ENCODE measurements at regions of chr4 and their contacts with region 1.

Region 1: DNA sequence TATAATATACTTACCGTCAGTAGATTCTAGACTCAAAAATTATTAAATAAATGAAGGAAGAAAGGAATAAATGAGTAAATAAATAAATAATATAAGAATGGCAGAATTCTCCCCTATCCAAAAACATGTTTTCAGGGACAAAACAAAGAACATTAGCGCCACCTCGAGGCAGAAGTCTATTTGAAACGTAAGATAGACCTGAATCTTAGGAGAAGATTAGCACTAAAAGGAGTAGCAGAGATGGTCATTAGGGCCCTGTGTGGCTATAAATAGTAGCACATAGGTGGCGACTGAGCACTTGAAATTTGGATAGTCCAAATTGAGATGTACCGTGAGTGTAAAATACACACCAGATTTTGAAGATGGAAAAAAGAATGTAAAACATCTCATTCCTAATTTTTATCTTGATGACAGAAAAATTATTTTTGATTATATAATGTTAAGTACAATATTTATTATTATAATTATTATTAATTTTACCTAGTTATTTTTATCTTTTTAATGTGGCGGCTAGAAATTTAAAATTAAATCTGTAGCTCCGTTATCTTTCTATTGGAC is 24.3 kb upstream of the SRD5A3 start:
- DNase-seq: peak; percentile 28
- H3K4me3 ChIP-seq: no peak overlapping the region
- H3K27ac ChIP-seq: no peak overlapping the region
- H3K4me1 ChIP-seq: peaks cover 20% of the 10 kb centered on the region
- H3K27me3 ChIP-seq: no peaks in the 10 kb centered on the region
- CTCF ChIP-seq: peak; percentile 77

Region 2: DNA sequence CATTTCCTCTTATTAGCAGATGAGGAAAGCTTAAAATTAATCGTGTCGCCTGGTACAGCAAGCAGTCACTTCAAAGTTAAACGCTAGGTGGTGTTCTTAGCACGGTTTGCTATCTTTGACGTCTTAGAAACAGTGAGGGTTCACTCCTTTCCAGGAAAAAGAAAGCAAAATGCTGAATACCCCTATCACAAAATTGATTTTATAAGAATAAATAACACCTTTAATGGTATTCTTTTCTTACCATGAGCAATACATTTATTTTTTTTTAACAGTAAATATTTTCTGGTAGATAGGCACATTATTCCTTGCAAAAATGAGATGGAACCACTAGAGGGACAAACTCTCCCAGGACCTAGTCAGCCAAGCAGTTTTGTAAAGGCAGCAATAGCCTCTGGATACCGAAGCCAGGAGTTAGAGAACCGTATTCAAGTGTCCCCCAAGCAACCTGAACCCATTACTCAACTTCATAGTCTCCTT is 350.3 kb before region 1 on chr4:
- intact Hi-C with region 1: loop called (anchors 10 kb)
- DNase-seq: no peak
- H3K4me3 ChIP-seq: no peak overlapping the region
- H3K27ac ChIP-seq: no peak overlapping the region
- H3K4me1 ChIP-seq: no peaks in the 10 kb centered on the region
- H3K27me3 ChIP-seq: peaks cover 9% of the 10 kb centered on the region
- CTCF ChIP-seq: peak; percentile 87

Region 3: GRCh38 chr4:54999003-54999402 is 322.8 kb before region 1 on chr4:
- intact Hi-C with region 1: loop called (anchors 5 kb)
- DNase-seq: no peak
- H3K4me3 ChIP-seq: no peak overlapping the region
- H3K27ac ChIP-seq: no peak overlapping the region
- H3K4me1 ChIP-seq: peaks cover 8% of the 10 kb centered on the region
- H3K27me3 ChIP-seq: no peaks in the 10 kb centered on the region
- CTCF ChIP-seq: peak; percentile 75

Region 4: DNA sequence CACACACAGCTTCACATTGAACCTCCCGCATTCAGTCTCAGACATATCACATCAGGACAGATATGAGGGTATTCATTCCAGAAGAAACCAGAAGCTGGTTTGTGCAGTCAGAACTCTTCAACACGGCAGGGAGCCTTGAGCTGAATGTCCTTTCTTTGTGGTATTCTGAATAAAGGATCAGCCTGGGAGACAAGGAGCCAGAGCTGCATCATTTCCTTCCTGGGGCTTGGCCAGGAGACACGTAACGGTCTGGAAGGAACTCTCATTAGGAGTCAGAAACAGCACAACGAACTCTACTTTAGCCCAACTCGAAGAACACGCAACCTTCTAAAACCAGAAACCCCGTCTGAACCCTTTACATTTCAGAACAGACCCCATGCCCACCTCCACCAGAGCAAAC is 242.8 kb before region 1 on chr4:
- intact Hi-C with region 1: no loop called
- DNase-seq: peak; percentile 79
- H3K4me3 ChIP-seq: peak overlapping the region; percentile 24
- H3K27ac ChIP-seq: peak overlapping the region; percentile 84
- H3K4me1 ChIP-seq: peaks cover 41% of the 10 kb centered on the region
- H3K27me3 ChIP-seq: no peaks in the 10 kb centered on the region
- CTCF ChIP-seq: no peak

Region 5: GRCh38 chr4:55184600-55185523 is 136.9 kb before region 1 on chr4:
- intact Hi-C with region 1: no loop called
- DNase-seq: peak; percentile 24
- H3K4me3 ChIP-seq: no peak overlapping the region
- H3K27ac ChIP-seq: peak overlapping the region; percentile 42
- H3K4me1 ChIP-seq: peaks cover 48% of the 10 kb centered on the region
- H3K27me3 ChIP-seq: no peaks in the 10 kb centered on the region
- CTCF ChIP-seq: peak; percentile 38

Region 6: GRCh38 chr4:55609393-55609866 is 287.6 kb after region 1 on chr4:
- intact Hi-C with region 1: no loop called
- DNase-seq: no peak
- H3K4me3 ChIP-seq: no peak overlapping the region
- H3K27ac ChIP-seq: no peak overlapping the region
- H3K4me1 ChIP-seq: no peaks in the 10 kb centered on the region
- H3K27me3 ChIP-seq: no peaks in the 10 kb centered on the region
- CTCF ChIP-seq: no peak

Measured in left ventricle myocardium inferior (tissue), 1 donor.